Activated T-helper 1 cell treated with anti-CD3 and anti-CD28 coated beads, Interleukin-12 subunit alpha, Interleukin-12 subunit beta, Interleukin-2, Interleukin-4 antibody, amounts not matched to agents 30 ng/mL and 10 ng/mL and 1 ng/mL, durations not matched to agents 14 hours and 24 hours and 36 hours (primary cell): ENCODE measurements at regions of chr21 and their contacts with region 1.

Region 1: GRCh38 chr21:14523234-14523633 is 22.9 kb downstream of the SAMSN1 start:
- DNase-seq: peak; percentile 35
- H3K4me3 Mint-ChIP-seq: peak overlapping the region; percentile 68
- H3K27ac Mint-ChIP-seq: peak overlapping the region; percentile 91
- H3K4me1 Mint-ChIP-seq: peaks cover 72% of the 10 kb centered on the region
- H3K27me3 Mint-ChIP-seq: no peaks in the 10 kb centered on the region

Region 2: GRCh38 chr21:14239281-14239680 is 284.0 kb before region 1 on chr21:
- intact Hi-C with region 1: no loop called
- DNase-seq: no peak
- H3K4me3 Mint-ChIP-seq: no peak overlapping the region
- H3K27ac Mint-ChIP-seq: no peak overlapping the region
- H3K4me1 Mint-ChIP-seq: no peaks in the 10 kb centered on the region
- H3K27me3 Mint-ChIP-seq: no peaks in the 10 kb centered on the region

Region 3: GRCh38 chr21:14454016-14455009 is 68.9 kb before region 1 on chr21:
- intact Hi-C with region 1: loop called (anchors 1 kb)
- DNase-seq: no peak
- H3K4me3 Mint-ChIP-seq: peak overlapping the region; percentile 62
- H3K27ac Mint-ChIP-seq: peak overlapping the region; percentile 92
- H3K4me1 Mint-ChIP-seq: peaks cover 74% of the 10 kb centered on the region
- H3K27me3 Mint-ChIP-seq: no peaks in the 10 kb centered on the region

Region 4: GRCh38 chr21:14545906-14546480 is 22.8 kb after region 1 on chr21 and contains the start of gene SAMSN1:
- intact Hi-C with region 1: loop called (anchors 1 kb)
- DNase-seq: peak; percentile 73
- H3K4me3 Mint-ChIP-seq: peak within 1 kb of the TSS; percentile 98
- H3K27ac Mint-ChIP-seq: peak within 1 kb of the TSS; percentile 92
- H3K4me1 Mint-ChIP-seq: peaks cover 81% of the 10 kb centered on the region
- H3K27me3 Mint-ChIP-seq: no peaks in the 10 kb centered on the region
- total RNA-seq, gene SAMSN1: 115 and 119 TPM in 2 replicates

Region 5: DNA sequence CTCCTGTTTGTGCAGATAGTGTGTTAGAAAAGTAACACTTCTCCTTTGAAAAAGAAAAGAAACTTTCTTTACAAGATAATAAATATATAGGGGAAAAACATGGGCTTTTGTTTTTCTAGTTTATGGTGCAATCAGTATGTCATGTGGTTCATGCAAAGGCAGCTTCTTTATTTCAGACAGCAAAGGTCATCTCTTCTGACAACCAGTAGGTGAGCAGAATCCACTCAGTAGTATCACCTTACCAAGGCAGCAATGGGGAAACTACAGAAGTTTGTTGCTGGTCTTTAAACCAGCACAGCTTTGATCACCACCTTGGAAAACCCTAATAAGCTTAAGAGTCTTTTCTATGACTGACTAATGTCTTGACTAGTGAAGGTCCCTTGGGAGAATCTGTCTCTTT is 35.9 kb after region 1 on chr21:
- intact Hi-C with region 1: no loop called
- DNase-seq: no peak
- H3K4me3 Mint-ChIP-seq: no peak overlapping the region
- H3K27ac Mint-ChIP-seq: peak overlapping the region; percentile 45
- H3K4me1 Mint-ChIP-seq: peaks cover 78% of the 10 kb centered on the region
- H3K27me3 Mint-ChIP-seq: no peaks in the 10 kb centered on the region

Region 6: DNA sequence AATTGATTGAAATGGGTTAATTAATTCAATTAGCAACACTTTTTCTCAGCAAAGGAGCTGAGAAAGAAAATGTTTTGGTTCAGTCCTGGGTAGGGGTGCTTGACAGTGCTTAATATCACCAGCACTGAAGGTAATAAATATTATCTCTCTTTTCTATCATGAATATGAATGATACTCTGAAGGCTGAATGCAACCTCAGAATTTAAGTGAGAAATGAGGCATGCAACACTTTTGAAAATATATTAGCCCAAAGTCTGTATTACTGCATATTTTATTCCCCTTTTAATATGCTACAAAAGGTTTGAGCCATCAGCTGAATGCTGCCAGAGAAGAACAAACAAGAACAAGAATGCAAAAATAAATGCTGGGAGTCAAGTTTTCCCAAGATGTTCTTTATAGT is 74.8 kb after region 1 on chr21:
- intact Hi-C with region 1: no loop called
- DNase-seq: no peak
- H3K4me3 Mint-ChIP-seq: no peak overlapping the region
- H3K27ac Mint-ChIP-seq: no peak overlapping the region
- H3K4me1 Mint-ChIP-seq: peaks cover 42% of the 10 kb centered on the region
- H3K27me3 Mint-ChIP-seq: no peaks in the 10 kb centered on the region

Region 7: DNA sequence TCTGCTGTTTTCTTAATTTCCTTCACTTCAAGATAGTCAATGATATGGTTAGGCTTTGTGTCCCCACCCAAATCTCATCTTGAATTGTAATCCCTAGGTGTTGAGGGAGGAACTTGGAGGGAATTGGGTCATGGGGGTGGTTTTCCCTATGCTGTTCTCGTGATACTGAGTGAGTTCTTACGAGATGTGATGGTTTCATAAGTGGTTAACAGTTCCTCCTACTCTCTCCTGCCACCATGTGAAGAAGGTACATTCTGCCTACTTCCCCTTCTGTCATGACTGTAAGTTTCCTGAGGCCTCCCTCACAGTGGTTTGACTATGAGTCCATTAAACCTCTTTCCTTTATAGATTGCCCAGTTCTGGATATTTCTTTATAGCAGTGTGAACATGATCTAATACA is 96.9 kb after region 1 on chr21:
- intact Hi-C with region 1: loop called (anchors 5 kb)
- DNase-seq: peak; percentile 4
- H3K4me3 Mint-ChIP-seq: no peak overlapping the region
- H3K27ac Mint-ChIP-seq: peak overlapping the region; percentile 74
- H3K4me1 Mint-ChIP-seq: peaks cover 37% of the 10 kb centered on the region
- H3K27me3 Mint-ChIP-seq: peaks cover 3% of the 10 kb centered on the region

Region 8: DNA sequence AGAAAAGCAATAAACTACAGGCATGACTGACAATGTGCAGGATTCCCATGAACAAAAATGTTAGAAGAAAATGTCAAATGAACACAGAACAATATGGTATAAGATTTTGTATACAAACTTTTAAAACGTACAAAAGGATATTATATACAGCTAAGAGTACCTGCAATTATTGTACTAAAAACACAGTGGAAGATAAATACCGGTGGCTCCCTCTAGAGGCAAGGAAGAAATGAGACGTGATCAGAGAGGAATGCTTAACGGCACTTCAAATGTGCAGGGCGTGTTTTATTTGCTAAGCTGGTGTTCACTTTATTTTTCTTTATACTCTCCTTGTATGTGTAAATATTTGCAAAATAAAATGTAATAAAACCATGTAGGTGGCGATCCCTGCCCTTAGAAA is 214.7 kb after region 1 on chr21:
- intact Hi-C with region 1: loop called (anchors 1 kb)
- DNase-seq: peak; percentile 41
- H3K4me3 Mint-ChIP-seq: no peak overlapping the region
- H3K27ac Mint-ChIP-seq: peak overlapping the region; percentile 9
- H3K4me1 Mint-ChIP-seq: peaks cover 40% of the 10 kb centered on the region
- H3K27me3 Mint-ChIP-seq: no peaks in the 10 kb centered on the region

Region 9: DNA sequence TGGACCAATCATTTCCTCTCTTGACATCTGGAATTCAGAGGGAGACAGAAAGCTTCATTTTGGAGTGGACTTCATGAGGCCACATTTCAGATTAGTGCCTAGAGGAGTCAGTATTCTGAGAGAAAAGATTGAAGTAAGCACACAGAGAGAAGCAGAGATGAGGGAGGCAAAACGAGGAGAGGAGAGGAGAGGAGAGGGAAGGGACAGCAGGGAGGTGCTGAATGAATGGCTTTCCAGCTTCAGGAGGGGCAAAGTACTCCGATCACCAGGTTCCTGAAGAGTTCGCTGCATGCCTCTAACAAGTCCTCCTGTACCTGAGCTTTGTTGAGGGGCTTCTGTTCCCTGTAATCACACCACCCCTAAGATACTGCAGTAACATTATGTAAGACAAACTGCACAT is 465.5 kb after region 1 on chr21:
- intact Hi-C with region 1: no loop called
- DNase-seq: no peak
- H3K4me3 Mint-ChIP-seq: no peak overlapping the region
- H3K27ac Mint-ChIP-seq: no peak overlapping the region
- H3K4me1 Mint-ChIP-seq: peaks cover 8% of the 10 kb centered on the region
- H3K27me3 Mint-ChIP-seq: no peaks in the 10 kb centered on the region

Region 10: DNA sequence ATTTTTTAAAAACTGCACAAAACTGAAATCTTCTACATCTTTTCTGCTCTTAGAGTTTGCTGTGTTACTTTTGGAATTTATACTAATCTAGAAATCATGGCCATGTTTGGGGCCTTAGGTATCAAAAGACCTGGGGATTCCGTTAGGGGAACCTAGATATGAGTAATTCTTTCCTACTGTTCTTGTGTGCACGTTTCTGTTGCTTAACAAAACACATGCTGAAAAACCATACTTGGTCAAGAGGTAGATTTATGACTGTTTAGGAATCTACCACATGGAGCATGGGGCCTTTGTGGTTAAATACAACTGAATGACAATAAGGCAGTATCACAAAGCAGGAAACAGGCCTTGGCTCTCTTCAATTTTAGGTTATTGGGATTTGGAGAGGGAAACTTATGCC is 914.6 kb after region 1 on chr21:
- intact Hi-C with region 1: loop called (anchors 5 kb)
- DNase-seq: no peak
- H3K4me3 Mint-ChIP-seq: no peak overlapping the region
- H3K27ac Mint-ChIP-seq: peak overlapping the region; percentile 34
- H3K4me1 Mint-ChIP-seq: peaks cover 12% of the 10 kb centered on the region
- H3K27me3 Mint-ChIP-seq: no peaks in the 10 kb centered on the region